Activated T-helper 2 cell treated with anti-CD3 and anti-CD28 coated beads, Interferon-gamma antibody, Interleukin-2, Interleukin-4, amounts not matched to agents 10 μg/mL and 5 μg/mL and 100 μg/mL, durations not matched to agents 14 hours and 24 hours and 36 hours (primary cell): ENCODE measurements at regions of chr18 and their contacts with region 1.

Region 1: GRCh38 chr18:63320046-63320689 is 599 bp upstream of the BCL2 start:
- DNase-seq: peak; percentile 84
- H3K4me3 Mint-ChIP-seq: peak overlapping the region; percentile 80
- H3K27ac Mint-ChIP-seq: peak overlapping the region; percentile 86
- H3K4me1 Mint-ChIP-seq: peaks cover 27% of the 10 kb centered on the region
- H3K27me3 Mint-ChIP-seq: no peaks in the 10 kb centered on the region

Region 2: GRCh38 chr18:62522504-62523254 is 797.5 kb before region 1 on chr18 and contains the start of gene ZCCHC2:
- intact Hi-C with region 1: loop called (anchors 5 kb)
- DNase-seq: peak; percentile 99
- H3K4me3 Mint-ChIP-seq: peak within 1 kb of the TSS; percentile 95
- H3K27ac Mint-ChIP-seq: peak within 1 kb of the TSS; percentile 88
- H3K4me1 Mint-ChIP-seq: peaks cover 29% of the 10 kb centered on the region
- H3K27me3 Mint-ChIP-seq: no peaks in the 10 kb centered on the region
- total RNA-seq, gene ZCCHC2: 43.8 and 48.6 TPM in 2 replicates

Region 3: DNA sequence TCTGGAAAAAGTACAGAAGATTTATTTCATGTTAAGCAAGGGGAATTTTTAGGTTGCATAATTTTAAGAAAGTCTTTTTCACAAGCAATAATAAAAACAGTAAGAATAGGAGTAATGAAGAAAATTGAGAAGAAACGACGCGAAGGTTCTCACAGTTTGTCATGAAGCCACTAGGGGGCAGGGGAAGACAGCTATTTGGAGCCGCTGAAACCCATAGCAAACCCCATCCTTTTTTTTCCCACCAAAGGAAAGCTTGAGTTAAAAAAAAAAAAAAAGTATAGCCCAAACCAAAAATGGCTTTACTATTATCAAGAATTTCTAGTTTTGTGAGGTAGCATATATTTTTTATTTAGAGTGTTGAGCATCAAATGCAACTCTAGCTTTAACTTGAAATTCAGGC is 303.9 kb before region 1 on chr18:
- intact Hi-C with region 1: loop called (anchors 1 kb)
- DNase-seq: no peak
- H3K4me3 Mint-ChIP-seq: no peak overlapping the region
- H3K27ac Mint-ChIP-seq: no peak overlapping the region
- H3K4me1 Mint-ChIP-seq: no peaks in the 10 kb centered on the region
- H3K27me3 Mint-ChIP-seq: peaks cover 55% of the 10 kb centered on the region

Region 4: DNA sequence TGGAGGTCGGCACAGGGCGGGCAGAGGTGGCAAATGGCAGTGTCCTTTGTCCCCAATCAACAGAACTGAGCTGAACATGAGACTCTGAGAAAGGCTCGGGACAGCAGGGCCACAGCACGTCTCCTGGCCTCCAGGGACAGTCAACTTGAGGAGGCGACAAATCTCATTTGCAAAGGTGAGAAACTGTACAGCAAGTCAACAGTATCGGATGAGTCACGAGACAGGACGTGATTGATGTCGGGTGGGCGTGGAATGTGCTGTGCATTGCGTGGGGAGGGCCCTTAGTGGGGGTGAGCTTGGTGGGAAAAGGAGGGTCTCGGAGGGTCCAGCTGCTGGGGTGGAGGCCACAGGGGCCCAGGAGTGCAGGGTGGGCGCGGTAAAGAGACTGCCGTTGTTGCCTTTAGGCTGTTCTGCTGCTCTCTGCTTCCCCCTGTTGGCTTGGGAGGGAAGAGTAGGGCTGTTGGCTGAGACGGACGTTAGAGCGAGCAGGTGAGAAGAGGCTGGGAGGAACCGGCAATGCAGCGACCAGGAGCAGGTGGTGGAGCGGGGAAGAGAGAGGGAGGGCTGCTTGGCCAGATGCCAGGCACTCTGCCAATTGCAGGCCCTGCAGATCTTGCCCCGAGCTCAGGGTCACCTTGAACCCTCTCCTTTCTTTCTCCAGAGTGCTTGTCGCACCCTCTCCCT is 164.9 kb before region 1 on chr18:
- intact Hi-C with region 1: loop called (anchors 1 kb)
- DNase-seq: peak; percentile 75
- H3K4me3 Mint-ChIP-seq: peak overlapping the region; percentile 71
- H3K27ac Mint-ChIP-seq: peak overlapping the region; percentile 99
- H3K4me1 Mint-ChIP-seq: peaks cover 93% of the 10 kb centered on the region
- H3K27me3 Mint-ChIP-seq: no peaks in the 10 kb centered on the region

Region 5: DNA sequence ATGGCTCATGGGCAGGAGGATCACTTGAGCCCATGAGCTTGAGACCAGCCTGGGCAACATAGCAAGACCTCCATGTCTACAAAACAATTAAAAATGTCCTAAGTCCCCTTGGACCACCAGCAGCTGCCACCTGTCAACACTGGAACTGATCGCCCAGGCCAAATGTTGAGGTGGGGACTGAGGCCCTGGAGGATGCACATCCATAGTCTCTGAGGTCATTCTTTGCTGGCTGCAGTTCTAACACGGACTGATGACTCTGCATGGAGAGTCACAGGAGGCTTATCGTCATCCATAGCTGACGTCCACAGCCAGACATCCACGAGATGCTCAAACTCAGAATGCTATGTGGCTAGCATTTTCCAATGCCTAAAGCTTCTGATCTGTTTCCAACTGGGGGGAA is 151.9 kb before region 1 on chr18:
- intact Hi-C with region 1: no loop called
- DNase-seq: no peak
- H3K4me3 Mint-ChIP-seq: no peak overlapping the region
- H3K27ac Mint-ChIP-seq: no peak overlapping the region
- H3K4me1 Mint-ChIP-seq: peaks cover 40% of the 10 kb centered on the region
- H3K27me3 Mint-ChIP-seq: no peaks in the 10 kb centered on the region

Region 6: DNA sequence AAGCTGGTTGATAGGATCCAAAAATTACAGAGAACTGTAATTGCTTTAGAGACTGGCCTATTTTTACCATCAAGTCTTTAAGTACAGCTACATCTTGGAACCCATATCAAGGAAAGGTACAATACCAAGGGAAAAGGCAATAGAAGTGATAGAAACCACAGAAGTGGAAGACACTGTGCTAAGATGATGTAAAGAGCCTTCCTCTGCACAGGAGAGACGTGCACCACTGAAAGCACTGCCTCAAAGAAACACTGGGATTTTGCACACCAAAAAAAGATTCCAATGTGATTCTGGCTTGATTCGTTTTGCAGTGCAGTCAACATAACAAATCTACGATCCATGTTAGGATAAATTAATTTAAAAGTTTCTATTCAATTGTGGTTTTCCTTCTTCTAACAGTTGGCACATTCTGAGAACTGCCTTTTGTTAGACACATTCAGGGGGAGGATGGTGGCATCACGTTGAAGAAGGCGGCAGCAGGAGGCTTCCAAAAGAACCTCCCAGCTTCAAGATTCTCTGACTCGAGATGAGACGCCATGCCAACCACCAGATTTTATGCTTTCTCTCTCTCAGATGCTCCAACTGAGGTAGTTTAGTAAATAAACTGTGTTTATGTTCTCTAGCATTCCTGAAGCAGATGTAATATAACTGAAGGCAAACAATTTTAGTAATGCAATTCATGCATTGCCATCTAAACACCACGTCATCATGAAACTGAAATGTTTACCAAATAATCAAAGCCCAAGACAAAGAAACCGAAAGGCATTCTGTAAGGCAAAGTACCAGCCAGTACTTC is 103.5 kb before region 1 on chr18:
- intact Hi-C with region 1: loop called (anchors 1 kb)
- DNase-seq: no peak
- H3K4me3 Mint-ChIP-seq: peak overlapping the region; percentile 57
- H3K27ac Mint-ChIP-seq: peak overlapping the region; percentile 91
- H3K4me1 Mint-ChIP-seq: peaks cover 88% of the 10 kb centered on the region
- H3K27me3 Mint-ChIP-seq: no peaks in the 10 kb centered on the region

Region 7: GRCh38 chr18:63339920-63340484 is 19.8 kb after region 1 on chr18:
- intact Hi-C with region 1: no loop called
- DNase-seq: no peak
- H3K4me3 Mint-ChIP-seq: no peak overlapping the region
- H3K27ac Mint-ChIP-seq: no peak overlapping the region
- H3K4me1 Mint-ChIP-seq: peaks cover 15% of the 10 kb centered on the region
- H3K27me3 Mint-ChIP-seq: no peaks in the 10 kb centered on the region

Region 8: GRCh38 chr18:63367053-63367953 is 47.1 kb after region 1 on chr18 and contains the start of gene KDSR:
- intact Hi-C with region 1: loop called (anchors 2 kb)
- DNase-seq: peak; percentile 82
- H3K4me3 Mint-ChIP-seq: peak within 1 kb of the TSS; percentile 94
- H3K27ac Mint-ChIP-seq: peak within 1 kb of the TSS; percentile 84
- H3K4me1 Mint-ChIP-seq: peaks cover 28% of the 10 kb centered on the region
- H3K27me3 Mint-ChIP-seq: no peaks in the 10 kb centered on the region
- total RNA-seq, gene KDSR: 73.3 and 76.1 TPM in 2 replicates